ENCODE measurements at regions of chr9 and their contacts with region 1.

Region 1: GRCh38 chr9:114738581-114739316 is 56.8 kb upstream of the TEX48 start:
- DNase-seq: peak; percentile 52 to 75 (median 60)
- ATAC-seq: peak in 3 of 4 donors; percentile 86 to 92 (median 87)
- H3K4me3 ChIP-seq: no peak overlapping the region
- H3K27ac ChIP-seq: no peak overlapping the region
- H3K4me1 ChIP-seq: peaks cover 0 to 24% (median 0%) of the 10 kb centered on the region in 12 donors
- H3K27me3 ChIP-seq: peaks cover 0 to 6% (median 0%) of the 10 kb centered on the region in 9 donors
- CTCF ChIP-seq: peak; percentile 49 to 86 (median 70)
- POLR2A ChIP-seq: no peak

Region 2: DNA sequence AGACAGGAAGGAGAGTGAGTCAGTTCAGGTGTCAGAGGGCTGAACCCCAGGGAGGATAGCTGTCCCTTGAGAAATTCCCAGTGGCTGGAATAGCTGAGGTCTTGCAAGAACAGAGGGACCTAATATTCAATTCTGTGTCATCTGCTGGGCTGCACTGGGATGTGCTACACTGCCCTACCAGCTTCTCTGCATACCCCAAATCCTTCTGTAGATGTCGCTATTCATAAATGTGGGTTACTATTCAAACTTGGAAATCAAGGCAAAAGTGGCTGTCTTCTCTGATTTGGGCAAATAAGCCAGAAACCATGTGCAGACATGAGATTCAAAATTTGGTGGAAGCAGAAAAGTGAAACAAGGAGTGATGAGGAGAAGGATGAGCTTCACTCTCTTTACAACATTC is 175.4 kb after region 1 on chr9:
- intact Hi-C with region 1: loop called in 9 of 10 experiments (anchors 2 to 5 kb)
- DNase-seq: no peak
- ATAC-seq: no peak
- H3K4me3 ChIP-seq: no peak overlapping the region
- H3K27ac ChIP-seq: no peak overlapping the region
- H3K4me1 ChIP-seq: peaks cover 0 to 15% (median 0%) of the 10 kb centered on the region in 12 donors
- H3K27me3 ChIP-seq: peaks cover 0 to 8% (median 0%) of the 10 kb centered on the region in 9 donors
- CTCF ChIP-seq: peak in 2 of 12 donors; percentile 11 to 13
- POLR2A ChIP-seq: no peak

Region 3: DNA sequence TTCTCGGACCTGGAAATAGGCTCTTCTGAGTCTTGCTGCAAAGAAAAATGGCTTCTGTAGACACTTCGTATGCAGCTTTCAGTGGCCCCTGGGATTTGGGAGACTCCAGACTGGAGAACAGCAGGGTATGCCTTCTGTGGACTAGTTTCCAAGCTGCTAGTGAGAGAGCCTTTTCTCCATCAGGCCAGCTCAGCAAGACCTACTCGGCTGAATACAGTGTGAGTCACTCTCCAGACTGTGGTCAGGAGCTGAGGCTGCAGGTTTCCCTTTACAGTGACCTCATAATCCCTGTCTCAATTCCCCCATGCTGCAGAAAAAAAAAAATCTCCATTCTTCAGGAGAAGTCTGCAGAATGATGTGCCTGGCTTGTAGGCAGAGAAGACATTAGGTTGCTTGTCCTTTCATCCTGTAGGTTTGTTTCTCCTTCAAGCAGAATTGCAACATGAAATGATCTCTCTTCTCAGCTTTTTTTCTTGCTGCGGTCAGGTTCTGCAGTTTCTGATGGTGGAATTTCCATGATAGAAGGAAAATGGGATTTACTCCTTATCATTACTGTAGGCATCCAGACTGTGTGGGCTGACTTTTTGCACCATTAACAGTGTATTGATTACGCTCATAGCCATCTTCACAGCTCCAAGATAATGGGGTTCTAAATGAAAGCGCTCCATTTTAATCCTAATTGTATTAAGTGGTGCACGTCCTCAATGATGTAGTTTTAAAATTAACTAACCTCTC is 270.0 kb after region 1 on chr9:
- intact Hi-C with region 1: loop called in 5 of 10 experiments (anchors 2 to 10 kb)
- DNase-seq: peak in 1 of 5 donors; percentile 43
- ATAC-seq: peak in 3 of 4 donors; percentile 59 to 88 (median 78)
- H3K4me3 ChIP-seq: no peak overlapping the region
- H3K27ac ChIP-seq: no peak overlapping the region
- H3K4me1 ChIP-seq: peaks cover 0 to 29% (median 0%) of the 10 kb centered on the region in 12 donors
- H3K27me3 ChIP-seq: peaks cover 0 to 39% (median 3%) of the 10 kb centered on the region in 9 donors
- CTCF ChIP-seq: no peak
- POLR2A ChIP-seq: no peak

Region 4: DNA sequence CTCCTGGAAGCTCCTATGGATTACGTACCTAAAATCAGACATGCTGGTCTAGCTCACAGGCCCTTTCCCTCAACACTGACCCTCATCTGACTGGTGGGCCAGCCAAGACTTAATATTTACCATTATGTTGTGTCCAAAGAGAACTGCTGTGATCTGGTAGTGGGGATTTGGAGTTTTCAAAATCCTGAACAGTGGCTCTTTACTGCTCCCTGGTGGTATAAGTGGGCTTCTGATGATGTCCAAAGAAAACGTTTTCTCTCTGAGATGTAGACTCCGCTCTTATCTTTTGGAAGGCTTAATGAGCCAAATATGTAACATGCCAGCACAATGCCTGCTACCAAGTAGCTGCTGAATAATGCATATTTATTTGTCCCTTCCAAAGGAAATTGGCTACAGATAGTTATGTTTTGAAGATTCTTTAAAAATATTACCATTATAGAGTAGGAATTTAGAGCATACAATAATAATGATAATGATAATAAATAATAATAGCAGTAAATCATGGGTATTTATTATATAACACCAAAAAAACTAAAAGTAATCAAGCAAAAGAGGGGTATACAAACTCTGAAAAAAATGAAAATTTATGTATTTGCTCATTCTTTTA is 785.8 kb after region 1 on chr9:
- intact Hi-C with region 1: loop called in 4 of 10 experiments (anchors 5 to 10 kb)
- DNase-seq: peak in 1 of 5 donors; percentile 19
- ATAC-seq: peak in 3 of 4 donors; percentile 42 to 58 (median 44)
- H3K4me3 ChIP-seq: no peak overlapping the region
- H3K27ac ChIP-seq: peak overlapping the region in 1 of 12 donors; percentile 35
- H3K4me1 ChIP-seq: peaks cover 0 to 7% (median 0%) of the 10 kb centered on the region in 12 donors
- H3K27me3 ChIP-seq: no peaks in the 10 kb centered on the region
- CTCF ChIP-seq: peak; percentile 31 to 73 (median 51)
- POLR2A ChIP-seq: no peak